ENCODE measurements at regions of chr6 and their contacts with region 1.

Region 1: GRCh38 chr6:32195652-32195901 is 3.1 kb upstream of the GPSM3 start:
- DNase-seq: peak; percentile 99 to 100 (median 100)
- ATAC-seq: peak; percentile 80
- H3K4me3 ChIP-seq: peak overlapping the region; percentile 85 to 87
- H3K4me3 Mint-ChIP-seq: peak overlapping the region; percentile 90
- H3K27ac ChIP-seq: peak overlapping the region; percentile 94 to 97
- H3K27ac Mint-ChIP-seq: peak overlapping the region; percentile 95
- H3K4me1 ChIP-seq: peaks cover 33% of the 10 kb centered on the region
- H3K4me1 Mint-ChIP-seq: peaks cover 35% of the 10 kb centered on the region
- H3K27me3 ChIP-seq: no peaks in the 10 kb centered on the region
- H3K27me3 Mint-ChIP-seq: no peaks in the 10 kb centered on the region
- CTCF ChIP-seq: peak; percentile 10

Region 2: DNA sequence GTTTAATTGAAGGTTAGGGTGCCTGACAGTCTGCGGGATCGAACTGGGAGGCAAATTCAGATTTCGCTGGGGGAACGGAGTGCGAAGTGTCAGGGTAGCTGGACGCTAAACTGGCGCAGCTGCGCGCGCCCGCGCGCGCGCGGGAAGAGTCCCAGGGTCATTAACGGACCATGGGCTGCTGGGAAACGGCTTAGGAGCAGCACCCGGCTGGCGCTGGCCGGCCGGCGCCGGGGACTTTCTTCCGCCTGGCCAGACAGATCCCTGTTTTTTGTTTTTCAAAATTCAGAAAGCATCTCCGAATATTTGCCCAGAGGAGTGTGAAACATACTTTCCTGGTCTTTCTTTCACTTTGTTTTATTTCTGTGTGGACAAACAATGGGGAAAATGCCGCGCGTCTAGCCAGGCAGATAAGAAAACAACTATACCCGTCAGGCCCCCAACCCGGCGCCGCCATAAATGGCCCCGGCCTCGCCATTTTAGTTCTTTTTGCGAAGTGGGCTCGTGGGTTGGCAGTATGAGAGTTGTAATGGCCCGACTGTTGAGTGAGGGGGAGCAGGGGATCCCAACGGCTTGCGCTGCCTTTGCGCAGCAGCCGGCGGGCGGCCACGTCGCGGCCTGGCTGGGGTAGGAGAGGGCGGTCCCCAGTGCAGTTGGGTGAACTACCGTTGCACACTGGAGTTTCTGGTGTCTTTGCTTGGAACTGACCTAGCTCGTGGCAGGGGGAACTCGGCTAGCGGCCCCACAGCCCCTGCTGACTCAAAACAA is 361.0 kb before region 1 on chr6:
- CTCF ChIA-PET with region 1: no interaction called
- POLR2A ChIA-PET with region 1: no interaction called
- intact Hi-C with region 1: loop called in 1 of 2 experiments (anchors 10 kb)
- DNase-seq: peak; percentile 70 to 89 (median 81)
- ATAC-seq: peak; percentile 75
- H3K4me3 ChIP-seq: peak overlapping the region; percentile 84 to 97
- H3K4me3 Mint-ChIP-seq: peak overlapping the region; percentile 98
- H3K27ac ChIP-seq: peak overlapping the region; percentile 93 to 99
- H3K27ac Mint-ChIP-seq: peak overlapping the region; percentile 99
- H3K4me1 ChIP-seq: peaks cover 42% of the 10 kb centered on the region
- H3K4me1 Mint-ChIP-seq: peaks cover 59% of the 10 kb centered on the region
- H3K27me3 ChIP-seq: no peaks in the 10 kb centered on the region
- H3K27me3 Mint-ChIP-seq: no peaks in the 10 kb centered on the region
- CTCF ChIP-seq: no peak

Region 3: GRCh38 chr6:32127717-32128592 is 67.6 kb before region 1 on chr6 and contains the start of gene ATF6B:
- CTCF ChIA-PET with region 1: interaction called, 7 read pairs
- POLR2A ChIA-PET with region 1: interaction called, 19 read pairs
- intact Hi-C with region 1: loop called (anchors 1 kb)
- DNase-seq: peak; percentile 90 to 100 (median 95)
- ATAC-seq: peak; percentile 94
- H3K4me3 ChIP-seq: peak within 1 kb of the TSS; percentile 81 to 88
- H3K4me3 Mint-ChIP-seq: peak within 1 kb of the TSS; percentile 99
- H3K27ac ChIP-seq: peak within 1 kb of the TSS; percentile 76 to 83
- H3K27ac Mint-ChIP-seq: peak within 1 kb of the TSS; percentile 97
- H3K4me1 ChIP-seq: peaks cover 31% of the 10 kb centered on the region
- H3K4me1 Mint-ChIP-seq: peaks cover 47% of the 10 kb centered on the region
- H3K27me3 ChIP-seq: no peaks in the 10 kb centered on the region
- H3K27me3 Mint-ChIP-seq: no peaks in the 10 kb centered on the region
- CTCF ChIP-seq: no peak
- total RNA-seq, gene ATF6B: 69.3 to 72.5 TPM

Region 4: GRCh38 chr6:32177788-32178546 is 17.6 kb before region 1 on chr6 and contains the start of gene RNF5:
- CTCF ChIA-PET with region 1: interaction called, 14 read pairs
- POLR2A ChIA-PET with region 1: interaction called, 95 read pairs
- intact Hi-C with region 1: loop called (anchors 1 kb)
- DNase-seq: peak; percentile 84 to 100 (median 93)
- ATAC-seq: peak; percentile 83
- H3K4me3 ChIP-seq: peak within 1 kb of the TSS; percentile 72 to 82
- H3K4me3 Mint-ChIP-seq: peak within 1 kb of the TSS; percentile 93
- H3K27ac ChIP-seq: peak within 1 kb of the TSS; percentile 89 to 98
- H3K27ac Mint-ChIP-seq: peak within 1 kb of the TSS; percentile 96
- H3K4me1 ChIP-seq: peaks cover 59% of the 10 kb centered on the region
- H3K4me1 Mint-ChIP-seq: peaks cover 69% of the 10 kb centered on the region
- H3K27me3 ChIP-seq: no peaks in the 10 kb centered on the region
- H3K27me3 Mint-ChIP-seq: no peaks in the 10 kb centered on the region
- CTCF ChIP-seq: no peak
- total RNA-seq, gene RNF5: 10.0 to 11.5 TPM

Region 5: GRCh38 chr6:33317669-33318425 is 1122.3 kb after region 1 on chr6 and contains the start of gene ZBTB22:
- CTCF ChIA-PET with region 1: no interaction called
- POLR2A ChIA-PET with region 1: no interaction called
- intact Hi-C with region 1: loop called in 1 of 2 experiments (anchors 10 kb)
- DNase-seq: peak; percentile 91 to 98 (median 96)
- ATAC-seq: peak; percentile 61
- H3K4me3 ChIP-seq: peak within 1 kb of the TSS; percentile 72 to 78
- H3K4me3 Mint-ChIP-seq: peak within 1 kb of the TSS; percentile 99
- H3K27ac ChIP-seq: peak within 1 kb of the TSS; percentile 60 to 99
- H3K27ac Mint-ChIP-seq: peak within 1 kb of the TSS; percentile 97
- H3K4me1 ChIP-seq: peaks cover 65% of the 10 kb centered on the region
- H3K4me1 Mint-ChIP-seq: peaks cover 77% of the 10 kb centered on the region
- H3K27me3 ChIP-seq: no peaks in the 10 kb centered on the region
- H3K27me3 Mint-ChIP-seq: no peaks in the 10 kb centered on the region
- CTCF ChIP-seq: no peak
- total RNA-seq, gene ZBTB22: 8.8 to 9.3 TPM